ENCODE measurements at regions of chr9 and their contacts with region 1.

Region 1: DNA sequence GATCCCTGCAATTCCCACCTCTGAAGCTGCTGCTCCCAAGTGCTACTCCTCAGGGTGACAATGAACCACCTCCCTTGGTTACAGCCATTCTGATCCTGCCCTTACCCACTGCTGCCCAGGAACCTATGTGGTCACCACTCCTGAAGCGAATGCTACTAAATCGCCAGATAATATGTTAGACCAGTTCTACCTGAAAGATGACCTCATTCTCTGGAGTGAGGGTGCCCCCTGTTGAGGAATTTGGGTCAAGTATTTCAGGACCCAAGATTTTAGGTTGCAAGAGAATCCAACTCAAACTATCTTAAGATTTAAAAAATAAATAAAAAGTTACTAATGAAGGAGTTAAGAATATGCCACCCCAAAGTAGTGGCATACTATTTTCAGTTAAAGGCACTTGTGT is 5.8 kb upstream of the SNAPC3 start:
- DNase-seq: peak; percentile 28 to 57 (median 30)
- ATAC-seq: peak; percentile 82
- H3K4me3 ChIP-seq: no peak overlapping the region
- H3K27ac ChIP-seq: no peak overlapping the region
- H3K4me1 ChIP-seq: no peaks in the 10 kb centered on the region; a peak in 2 of 5 replicates
- H3K27me3 ChIP-seq: no peaks in the 10 kb centered on the region
- CTCF ChIP-seq: peak; percentile 54 to 76 (median 57)
- EP300 ChIP-seq: no peak
- POLR2A ChIP-seq: no peak
- RAD21 ChIP-seq: peak; percentile 80 to 84

Region 2: DNA sequence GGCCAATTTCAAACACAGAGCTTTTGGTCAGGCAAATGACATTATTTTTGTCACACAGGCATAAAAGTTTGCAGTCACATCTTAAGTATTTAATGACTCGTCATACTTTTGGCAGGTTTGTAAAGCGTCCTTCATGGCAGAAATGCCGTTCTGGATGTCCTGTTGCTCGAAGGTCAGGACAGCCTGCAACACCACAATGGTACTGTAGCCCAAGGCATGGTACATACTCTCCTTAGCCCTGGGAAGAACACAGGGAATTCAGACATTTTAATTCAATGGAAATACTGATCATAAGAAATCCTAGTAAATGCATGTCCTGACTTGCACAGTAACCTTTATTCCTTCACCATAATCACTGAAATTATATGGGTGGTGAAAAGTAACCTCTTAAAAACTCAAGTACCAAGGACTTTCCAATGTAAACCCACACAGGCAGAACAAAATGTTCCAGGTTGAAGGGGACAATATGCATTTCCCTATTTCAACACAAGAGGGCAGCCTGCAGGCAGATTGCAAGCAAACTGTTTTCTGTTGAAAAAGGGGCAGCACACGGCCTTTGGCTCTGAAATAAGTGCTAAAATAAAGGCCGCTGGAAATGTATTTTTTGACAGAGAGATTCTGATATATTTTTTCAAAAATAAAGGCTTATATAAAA is 205.6 kb before region 1 on chr9:
- CTCF ChIA-PET with region 1: no interaction called
- POLR2A ChIA-PET with region 1: no interaction called
- in situ Hi-C with region 1: loop called (anchors 10 kb)
- intact Hi-C with region 1: loop called (anchors 5 kb)
- DNase-seq: peak; percentile 21 to 62 (median 30)
- ATAC-seq: peak; percentile 58; the same call in 1 of the 3 replicates
- H3K4me3 ChIP-seq: no peak overlapping the region
- H3K27ac ChIP-seq: no peak overlapping the region
- H3K4me1 ChIP-seq: no peaks in the 10 kb centered on the region
- H3K27me3 ChIP-seq: no peaks in the 10 kb centered on the region
- CTCF ChIP-seq: peak; percentile 64 to 69 (median 64)
- EP300 ChIP-seq: no peak
- POLR2A ChIP-seq: no peak
- RAD21 ChIP-seq: peak; percentile 65 to 72

Region 3: GRCh38 chr9:15244001-15244441 is 172.9 kb before region 1 on chr9:
- CTCF ChIA-PET with region 1: no interaction called
- POLR2A ChIA-PET with region 1: no interaction called
- in situ Hi-C with region 1: no loop called
- intact Hi-C with region 1: no loop called
- DNase-seq: no peak
- ATAC-seq: no peak
- H3K4me3 ChIP-seq: no peak overlapping the region
- H3K27ac ChIP-seq: no peak overlapping the region
- H3K4me1 ChIP-seq: no peaks in the 10 kb centered on the region
- H3K27me3 ChIP-seq: no peaks in the 10 kb centered on the region
- CTCF ChIP-seq: no peak
- EP300 ChIP-seq: no peak
- POLR2A ChIP-seq: no peak
- RAD21 ChIP-seq: no peak

Region 4: DNA sequence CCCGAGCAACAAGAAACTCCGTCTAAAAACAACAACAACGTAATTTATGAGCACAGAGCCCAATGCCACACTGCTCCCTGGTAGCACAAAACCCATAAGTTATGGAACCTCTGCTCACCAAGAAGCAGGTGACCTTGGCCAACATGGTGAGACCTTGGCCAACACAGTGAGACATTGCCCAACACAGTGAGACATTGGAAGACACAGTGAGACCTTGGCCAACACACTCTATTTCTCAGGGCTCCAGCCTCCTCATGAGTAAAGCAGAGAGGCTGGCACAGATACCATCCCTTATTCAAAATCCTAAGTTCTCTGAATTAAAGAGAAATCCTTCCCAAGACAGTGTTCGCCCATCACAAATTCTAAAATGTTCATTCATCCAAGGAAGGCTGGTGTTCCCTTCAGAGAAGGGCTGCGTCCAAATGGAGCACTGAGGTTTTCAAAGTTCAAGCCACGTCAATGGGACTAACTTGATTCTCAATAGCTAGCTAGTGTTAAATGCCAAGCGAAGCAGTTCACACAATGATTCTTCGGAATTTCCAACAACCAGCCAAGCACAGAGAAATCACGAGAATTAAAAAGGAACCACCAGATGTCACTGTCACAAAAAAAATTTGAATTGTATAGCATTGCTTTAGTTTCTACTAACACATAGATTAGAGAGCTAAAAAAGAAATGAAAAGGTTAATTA is 139.3 kb before region 1 on chr9:
- CTCF ChIA-PET with region 1: interaction called, 3 read pairs
- POLR2A ChIA-PET with region 1: no interaction called
- in situ Hi-C with region 1: loop called (anchors 10 kb)
- intact Hi-C with region 1: loop called (anchors 5 kb)
- DNase-seq: peak in 1 of 4 experiments; percentile 9
- ATAC-seq: peak; percentile 47; the same call in 1 of the 3 replicates
- H3K4me3 ChIP-seq: no peak overlapping the region
- H3K27ac ChIP-seq: no peak overlapping the region
- H3K4me1 ChIP-seq: no peaks in the 10 kb centered on the region
- H3K27me3 ChIP-seq: no peaks in the 10 kb centered on the region; a peak in 2 of 5 replicates
- CTCF ChIP-seq: peak in 2 of 3 experiments; percentile 17 to 53; a peak in 2 of 6 replicates
- EP300 ChIP-seq: no peak
- POLR2A ChIP-seq: no peak
- RAD21 ChIP-seq: peak; percentile 59 to 62

Region 5: GRCh38 chr9:15357050-15357653 is 59.7 kb before region 1 on chr9:
- CTCF ChIA-PET with region 1: no interaction called
- POLR2A ChIA-PET with region 1: no interaction called
- in situ Hi-C with region 1: no loop called
- intact Hi-C with region 1: loop called (anchors 5 kb)
- DNase-seq: peak in 1 of 4 experiments; percentile 10
- ATAC-seq: 0 out of 3 replicates have a peak, but pooled peaks have one; percentile 57
- H3K4me3 ChIP-seq: no peak overlapping the region
- H3K27ac ChIP-seq: no peak overlapping the region
- H3K4me1 ChIP-seq: no peaks in the 10 kb centered on the region; a peak in 1 of 5 replicates
- H3K27me3 ChIP-seq: no peaks in the 10 kb centered on the region; a peak in 1 of 5 replicates
- CTCF ChIP-seq: peak; percentile 11 to 42 (median 32); a peak in 3 of 6 replicates
- EP300 ChIP-seq: no peak
- POLR2A ChIP-seq: no peak
- RAD21 ChIP-seq: no peak

Region 6: DNA sequence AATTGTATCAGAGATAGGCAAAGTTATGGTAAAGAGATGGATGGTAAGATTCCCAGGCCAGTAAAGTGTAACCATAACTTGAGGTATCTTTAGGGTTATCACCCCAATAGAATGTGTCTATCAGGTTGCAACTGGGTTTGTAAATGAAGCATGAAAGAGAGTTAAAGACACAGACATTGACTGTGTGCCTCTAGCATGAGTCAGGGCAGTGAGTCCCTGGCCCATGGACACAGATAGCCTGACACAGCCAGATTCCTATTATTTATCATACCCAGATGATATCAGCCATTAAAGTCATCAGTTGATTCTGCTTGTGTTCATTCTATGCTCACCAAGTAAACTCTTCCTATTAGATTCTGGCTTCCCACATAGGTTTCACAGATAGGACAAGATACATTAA is 27.7 kb before region 1 on chr9:
- CTCF ChIA-PET with region 1: no interaction called
- POLR2A ChIA-PET with region 1: no interaction called
- in situ Hi-C with region 1: no loop called
- intact Hi-C with region 1: no loop called
- DNase-seq: no peak
- ATAC-seq: no peak
- H3K4me3 ChIP-seq: no peak overlapping the region
- H3K27ac ChIP-seq: no peak overlapping the region
- H3K4me1 ChIP-seq: peaks cover 3 to 5% of the 10 kb centered on the region in 2 experiments; a peak in 3 of 5 replicates
- H3K27me3 ChIP-seq: no peaks in the 10 kb centered on the region
- CTCF ChIP-seq: no peak
- EP300 ChIP-seq: no peak
- POLR2A ChIP-seq: no peak
- RAD21 ChIP-seq: no peak

Region 7: GRCh38 chr9:15606643-15607472 is 190.0 kb after region 1 on chr9:
- CTCF ChIA-PET with region 1: no interaction called
- POLR2A ChIA-PET with region 1: interaction called, 3 read pairs
- in situ Hi-C with region 1: no loop called
- intact Hi-C with region 1: loop called (anchors 5 kb)
- DNase-seq: peak; percentile 6 to 28 (median 12)
- ATAC-seq: peak; percentile 57; the same call in 1 of the 3 replicates
- H3K4me3 ChIP-seq: no peak overlapping the region
- H3K27ac ChIP-seq: no peak overlapping the region
- H3K4me1 ChIP-seq: no peaks in the 10 kb centered on the region
- H3K27me3 ChIP-seq: no peaks in the 10 kb centered on the region
- CTCF ChIP-seq: peak in 2 of 3 experiments; percentile 26 to 65; a peak in 3 of 6 replicates
- EP300 ChIP-seq: no peak
- POLR2A ChIP-seq: no peak
- RAD21 ChIP-seq: peak; percentile 48 to 65